PC-9 (cell line): ENCODE measurements at regions of chr7 and their contacts with region 1.

Region 1: GRCh38 chr7:6272481-6273323 is at the start of gene CYTH3:
- DNase-seq: peak; percentile 61 to 96
- H3K4me3 ChIP-seq: peak within 1 kb of the TSS; percentile 90
- H3K27ac ChIP-seq: peak within 1 kb of the TSS; percentile 36
- H3K4me1 ChIP-seq: peaks cover 28% of the 10 kb centered on the region
- H3K27me3 ChIP-seq: no peaks in the 10 kb centered on the region
- CTCF ChIP-seq: no peak
- total RNA-seq, gene CYTH3: 78.8 and 84.4 TPM in 2 replicates

Region 2: GRCh38 chr7:6160191-6160623 is 112.5 kb before region 1 on chr7:
- CTCF ChIA-PET with region 1: interaction called, 4 read pairs
- POLR2A ChIA-PET with region 1: no interaction called
- intact Hi-C with region 1: loop called (anchors 5 kb)
- DNase-seq: peak in 1 of 2 experiments; percentile 38
- H3K4me3 ChIP-seq: no peak overlapping the region
- H3K27ac ChIP-seq: no peak overlapping the region
- H3K4me1 ChIP-seq: no peaks in the 10 kb centered on the region
- H3K27me3 ChIP-seq: no peaks in the 10 kb centered on the region
- CTCF ChIP-seq: peak; percentile 55

Region 3: DNA sequence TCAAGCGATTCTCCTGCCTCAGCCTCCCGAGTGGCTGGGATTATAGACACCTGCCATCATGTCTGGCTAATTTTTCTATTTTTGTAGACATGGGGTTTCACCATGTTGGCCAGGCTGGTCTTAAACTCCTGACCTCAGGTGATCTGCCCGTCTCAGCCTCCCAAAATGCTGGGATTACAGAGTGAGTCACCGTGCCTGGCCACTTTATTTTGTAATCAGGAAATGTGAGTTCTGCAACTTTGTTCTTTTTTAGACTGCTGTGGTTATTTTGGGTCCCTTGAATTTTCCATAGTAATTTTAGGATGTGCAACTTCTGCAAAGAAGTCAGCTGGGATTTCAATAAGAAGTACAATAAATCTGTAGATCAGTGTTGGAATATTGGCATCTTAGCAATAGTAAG is 97.1 kb before region 1 on chr7:
- CTCF ChIA-PET with region 1: no interaction called
- POLR2A ChIA-PET with region 1: interaction called, 20 read pairs
- intact Hi-C with region 1: loop called (anchors 5 kb)
- DNase-seq: peak; percentile 69 to 84
- H3K4me3 ChIP-seq: no peak overlapping the region
- H3K27ac ChIP-seq: peak overlapping the region; percentile 49
- H3K4me1 ChIP-seq: peaks cover 39% of the 10 kb centered on the region
- H3K27me3 ChIP-seq: no peaks in the 10 kb centered on the region
- CTCF ChIP-seq: no peak

Region 4: DNA sequence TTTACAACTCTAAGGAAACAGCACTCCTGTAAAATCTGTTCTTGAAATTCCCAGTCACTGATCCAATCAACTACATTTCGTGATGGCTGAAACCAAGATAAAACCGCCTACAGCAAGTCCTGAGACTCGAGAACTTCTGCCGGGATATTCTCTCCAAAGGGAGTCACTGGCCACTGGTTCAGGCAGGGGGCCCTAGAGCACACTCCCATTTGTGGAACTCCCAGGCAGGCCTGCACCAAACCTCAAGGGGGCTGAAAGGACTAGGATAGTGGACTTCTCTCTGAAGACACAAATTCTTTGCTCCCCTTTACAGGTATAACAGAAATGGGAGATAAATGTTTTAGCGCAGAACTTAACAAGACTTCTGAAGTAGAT is 16.6 kb before region 1 on chr7:
- CTCF ChIA-PET with region 1: no interaction called
- POLR2A ChIA-PET with region 1: no interaction called
- intact Hi-C with region 1: loop called (anchors 1 kb)
- DNase-seq: no peak
- H3K4me3 ChIP-seq: no peak overlapping the region
- H3K27ac ChIP-seq: no peak overlapping the region
- H3K4me1 ChIP-seq: 0 out of 2 replicates have a peak, but pooled peaks cover 6% of the 10 kb centered on the region
- H3K27me3 ChIP-seq: no peaks in the 10 kb centered on the region
- CTCF ChIP-seq: no peak

Region 5: DNA sequence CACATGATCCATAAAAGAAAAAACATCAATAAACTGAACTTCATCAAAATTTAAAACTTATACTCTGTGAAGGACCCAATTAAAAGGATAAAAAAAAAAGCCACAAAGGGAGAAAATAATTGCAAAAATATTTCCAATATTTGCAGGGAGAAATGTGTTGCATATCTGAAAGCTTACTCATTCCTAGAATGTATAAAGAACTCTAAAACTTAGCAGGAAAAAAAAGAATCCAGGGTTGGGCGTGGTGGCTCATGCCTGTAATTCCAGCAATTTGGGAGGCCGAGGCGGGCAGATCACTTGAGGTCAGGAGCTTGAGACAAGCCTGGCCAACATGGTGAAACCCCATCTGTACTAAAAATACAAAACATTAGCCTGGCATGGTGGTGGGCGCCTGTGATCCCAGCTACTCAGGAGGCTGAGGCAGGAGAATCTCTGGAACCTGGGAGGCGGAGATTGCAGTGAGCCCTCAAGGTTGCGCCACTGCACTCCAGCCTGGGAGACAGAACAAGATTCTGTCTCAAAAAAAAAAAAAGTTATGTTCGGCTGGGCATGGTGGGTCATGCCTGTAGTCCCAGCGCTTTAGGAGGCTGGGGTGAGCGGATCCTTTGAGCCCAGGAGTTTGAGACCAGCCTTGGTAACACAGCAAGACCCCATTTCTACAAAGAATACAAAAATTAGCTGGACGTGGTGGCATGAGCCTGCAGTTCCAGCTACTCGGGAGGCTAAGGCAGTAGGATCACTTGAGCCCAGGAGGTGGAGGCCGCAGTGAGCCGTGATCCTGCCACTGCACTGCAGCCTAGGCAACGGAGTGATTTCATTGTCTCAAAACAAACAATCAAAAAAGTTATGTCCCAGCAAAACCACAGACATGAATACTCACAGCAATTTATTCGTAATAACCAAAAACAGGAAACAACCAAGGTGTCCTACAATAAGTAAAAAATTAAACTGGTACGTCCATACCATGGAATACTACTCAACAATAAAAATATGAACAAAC is 11.0 kb after region 1 on chr7:
- CTCF ChIA-PET with region 1: interaction called, 4 read pairs
- POLR2A ChIA-PET with region 1: interaction called, 12 read pairs
- intact Hi-C with region 1: no loop called
- DNase-seq: peak; percentile 90 to 93
- H3K4me3 ChIP-seq: peak overlapping the region; percentile 48; the same call in 1 of the 2 replicates
- H3K27ac ChIP-seq: peak overlapping the region; percentile 100
- H3K4me1 ChIP-seq: peaks cover 35% of the 10 kb centered on the region
- H3K27me3 ChIP-seq: no peaks in the 10 kb centered on the region
- CTCF ChIP-seq: no peak

Region 6: DNA sequence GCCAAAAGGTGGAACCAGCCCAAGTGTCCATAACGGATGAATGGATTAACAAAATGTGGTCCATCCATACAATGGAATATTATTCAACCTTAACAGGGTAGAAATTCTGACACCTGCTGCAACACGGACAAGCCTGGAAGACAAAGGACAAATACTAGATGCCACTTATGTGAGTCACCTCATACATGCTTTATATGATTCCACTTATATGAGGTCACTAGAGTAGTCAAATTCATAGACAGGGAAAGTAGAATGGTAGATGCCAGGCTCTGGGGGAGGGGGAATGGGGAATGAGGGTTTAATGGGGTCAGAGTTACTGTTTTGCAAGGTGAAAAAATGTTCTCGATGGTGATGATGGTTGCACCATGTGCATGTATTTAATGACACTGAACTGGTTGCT is 33.8 kb after region 1 on chr7:
- CTCF ChIA-PET with region 1: no interaction called
- POLR2A ChIA-PET with region 1: interaction called, 4 read pairs
- intact Hi-C with region 1: loop called (anchors 2 kb)
- DNase-seq: peak; percentile 90 to 99
- H3K4me3 ChIP-seq: no peak overlapping the region
- H3K27ac ChIP-seq: peak overlapping the region; percentile 75
- H3K4me1 ChIP-seq: peaks cover 36% of the 10 kb centered on the region
- H3K27me3 ChIP-seq: no peaks in the 10 kb centered on the region
- CTCF ChIP-seq: no peak

Region 7: DNA sequence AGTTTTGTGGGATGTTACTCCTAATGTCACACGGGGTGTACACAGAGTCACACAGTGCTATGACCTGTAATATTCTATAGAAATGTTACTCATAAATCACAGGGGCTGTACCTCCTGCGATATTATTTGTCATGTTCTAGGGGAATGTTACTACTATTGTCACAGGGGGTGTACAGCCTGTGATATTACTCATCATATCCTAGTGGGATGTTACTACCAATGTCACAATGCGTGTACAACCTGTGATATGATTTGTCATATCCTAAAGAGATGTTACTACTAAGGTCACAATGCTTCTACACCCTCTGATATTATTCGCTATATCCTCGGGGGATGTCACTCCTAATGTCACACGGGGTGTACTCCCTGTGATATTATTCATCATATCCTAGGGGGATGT is 560.9 kb after region 1 on chr7:
- CTCF ChIA-PET with region 1: no interaction called
- POLR2A ChIA-PET with region 1: no interaction called
- intact Hi-C with region 1: no loop called
- DNase-seq: no peak
- H3K4me3 ChIP-seq: no peak overlapping the region
- H3K27ac ChIP-seq: no peak overlapping the region
- H3K4me1 ChIP-seq: peaks cover 19% of the 10 kb centered on the region
- H3K27me3 ChIP-seq: no peaks in the 10 kb centered on the region
- CTCF ChIP-seq: no peak